ENCODE measurements at regions of chr1 and their contacts with region 1.

Region 1: GRCh38 chr1:54488779-54489626 is 59.0 kb upstream of the ACOT11 start:
- DNase-seq: peak; percentile 45 to 89 (median 74)
- ATAC-seq: peak; percentile 47
- H3K4me3 ChIP-seq: peak overlapping the region; percentile 71 to 90
- H3K4me3 Mint-ChIP-seq: peak overlapping the region; percentile 83
- H3K27ac ChIP-seq: peak overlapping the region; percentile 42 to 73
- H3K27ac Mint-ChIP-seq: peak overlapping the region; percentile 67
- H3K4me1 ChIP-seq: peaks cover 34% of the 10 kb centered on the region
- H3K4me1 Mint-ChIP-seq: peaks cover 37% of the 10 kb centered on the region
- H3K27me3 ChIP-seq: peaks cover 0 to 3% of the 10 kb centered on the region in 2 experiments
- H3K27me3 Mint-ChIP-seq: peaks cover 3% of the 10 kb centered on the region
- CTCF ChIP-seq: peak; percentile 96

Region 2: GRCh38 chr1:53889304-53890298 is 599.4 kb before region 1 on chr1 and contains the start of gene YIPF1:
- CTCF ChIA-PET with region 1: no interaction called
- POLR2A ChIA-PET with region 1: no interaction called
- intact Hi-C with region 1: loop called in 1 of 2 experiments (anchors 5 kb)
- DNase-seq: peak; percentile 68 to 92 (median 86)
- ATAC-seq: peak; percentile 98
- H3K4me3 ChIP-seq: peak within 1 kb of the TSS; percentile 69 to 97
- H3K4me3 Mint-ChIP-seq: peak within 1 kb of the TSS; percentile 94
- H3K27ac ChIP-seq: peak within 1 kb of the TSS; percentile 42 to 56
- H3K27ac Mint-ChIP-seq: peak within 1 kb of the TSS; percentile 94
- H3K4me1 ChIP-seq: peaks cover 19% of the 10 kb centered on the region
- H3K4me1 Mint-ChIP-seq: peaks cover 49% of the 10 kb centered on the region
- H3K27me3 ChIP-seq: no peaks in the 10 kb centered on the region
- H3K27me3 Mint-ChIP-seq: no peaks in the 10 kb centered on the region
- CTCF ChIP-seq: no peak
- total RNA-seq, gene YIPF1: 4.6 to 5.4 TPM

Region 3: GRCh38 chr1:54070171-54070837 is 418.7 kb before region 1 on chr1:
- CTCF ChIA-PET with region 1: interaction called, 17 read pairs
- POLR2A ChIA-PET with region 1: no interaction called
- intact Hi-C with region 1: loop called (anchors 1 kb)
- DNase-seq: peak in 2 of 9 experiments; percentile 62 to 75
- ATAC-seq: peak; percentile 89
- H3K4me3 ChIP-seq: no peak overlapping the region
- H3K4me3 Mint-ChIP-seq: no peak overlapping the region
- H3K27ac ChIP-seq: no peak overlapping the region
- H3K27ac Mint-ChIP-seq: no peak overlapping the region
- H3K4me1 ChIP-seq: no peaks in the 10 kb centered on the region
- H3K4me1 Mint-ChIP-seq: no peaks in the 10 kb centered on the region
- H3K27me3 ChIP-seq: no peaks in the 10 kb centered on the region
- H3K27me3 Mint-ChIP-seq: no peaks in the 10 kb centered on the region
- CTCF ChIP-seq: peak; percentile 85

Region 4: DNA sequence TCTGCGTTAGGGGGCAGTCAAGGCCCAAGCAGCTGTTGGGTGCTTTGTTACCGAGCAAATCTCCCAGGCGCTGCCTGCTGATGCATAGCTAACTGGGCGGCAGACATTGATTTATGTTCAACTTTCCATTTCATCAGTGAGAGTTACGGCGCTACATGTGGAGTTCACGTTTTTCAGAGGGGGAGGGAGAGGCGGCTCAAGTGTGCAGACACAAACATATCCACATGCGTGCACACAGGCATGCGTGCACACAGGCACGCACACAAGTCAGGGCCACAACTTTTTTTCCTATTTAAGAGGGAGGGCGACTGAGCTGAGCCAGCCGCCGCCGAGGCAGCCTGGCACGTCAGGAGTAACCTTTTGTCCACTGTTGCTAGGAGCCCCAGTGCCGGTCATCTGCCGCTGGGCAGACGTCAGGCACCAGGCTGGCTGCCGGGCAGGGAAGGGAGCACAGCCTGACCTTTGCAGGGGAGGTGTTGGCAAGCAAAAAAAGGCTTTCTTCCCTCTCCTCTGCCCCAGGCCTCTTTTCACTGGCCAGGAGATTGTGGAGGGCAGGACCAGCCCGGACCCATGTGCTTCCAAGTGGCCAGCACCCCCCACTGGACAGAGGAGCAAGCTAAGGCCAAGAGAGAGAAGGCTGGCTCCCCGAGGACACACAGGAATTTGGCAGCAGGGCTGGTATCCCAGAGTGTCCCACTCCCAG is 215.8 kb before region 1 on chr1:
- CTCF ChIA-PET with region 1: interaction called, 15 read pairs
- POLR2A ChIA-PET with region 1: no interaction called
- intact Hi-C with region 1: loop called (anchors 2 to 5 kb)
- DNase-seq: peak in 1 of 9 experiments; percentile 35
- ATAC-seq: peak; percentile 44
- H3K4me3 ChIP-seq: no peak overlapping the region
- H3K4me3 Mint-ChIP-seq: no peak overlapping the region
- H3K27ac ChIP-seq: no peak overlapping the region
- H3K27ac Mint-ChIP-seq: peak overlapping the region; percentile 27
- H3K4me1 ChIP-seq: peaks cover 17% of the 10 kb centered on the region
- H3K4me1 Mint-ChIP-seq: peaks cover 56% of the 10 kb centered on the region
- H3K27me3 ChIP-seq: no peaks in the 10 kb centered on the region
- H3K27me3 Mint-ChIP-seq: no peaks in the 10 kb centered on the region
- CTCF ChIP-seq: no peak

Region 5: GRCh38 chr1:54397090-54397591 is 91.9 kb before region 1 on chr1:
- CTCF ChIA-PET with region 1: interaction called, 21 read pairs
- POLR2A ChIA-PET with region 1: interaction called, 5 read pairs
- intact Hi-C with region 1: no loop called
- DNase-seq: no peak
- ATAC-seq: no peak
- H3K4me3 ChIP-seq: no peak overlapping the region
- H3K4me3 Mint-ChIP-seq: no peak overlapping the region
- H3K27ac ChIP-seq: no peak overlapping the region
- H3K27ac Mint-ChIP-seq: no peak overlapping the region
- H3K4me1 ChIP-seq: peaks cover 29% of the 10 kb centered on the region
- H3K4me1 Mint-ChIP-seq: peaks cover 64% of the 10 kb centered on the region
- H3K27me3 ChIP-seq: no peaks in the 10 kb centered on the region
- H3K27me3 Mint-ChIP-seq: no peaks in the 10 kb centered on the region
- CTCF ChIP-seq: no peak

Region 6: GRCh38 chr1:54564312-54565112 is 75.5 kb after region 1 on chr1:
- CTCF ChIA-PET with region 1: no interaction called
- POLR2A ChIA-PET with region 1: no interaction called
- intact Hi-C with region 1: no loop called
- DNase-seq: no peak
- ATAC-seq: no peak
- H3K4me3 ChIP-seq: no peak overlapping the region
- H3K4me3 Mint-ChIP-seq: no peak overlapping the region
- H3K27ac ChIP-seq: no peak overlapping the region
- H3K27ac Mint-ChIP-seq: no peak overlapping the region
- H3K4me1 ChIP-seq: no peaks in the 10 kb centered on the region
- H3K4me1 Mint-ChIP-seq: no peaks in the 10 kb centered on the region
- H3K27me3 ChIP-seq: no peaks in the 10 kb centered on the region
- H3K27me3 Mint-ChIP-seq: no peaks in the 10 kb centered on the region
- CTCF ChIP-seq: no peak

Region 7: DNA sequence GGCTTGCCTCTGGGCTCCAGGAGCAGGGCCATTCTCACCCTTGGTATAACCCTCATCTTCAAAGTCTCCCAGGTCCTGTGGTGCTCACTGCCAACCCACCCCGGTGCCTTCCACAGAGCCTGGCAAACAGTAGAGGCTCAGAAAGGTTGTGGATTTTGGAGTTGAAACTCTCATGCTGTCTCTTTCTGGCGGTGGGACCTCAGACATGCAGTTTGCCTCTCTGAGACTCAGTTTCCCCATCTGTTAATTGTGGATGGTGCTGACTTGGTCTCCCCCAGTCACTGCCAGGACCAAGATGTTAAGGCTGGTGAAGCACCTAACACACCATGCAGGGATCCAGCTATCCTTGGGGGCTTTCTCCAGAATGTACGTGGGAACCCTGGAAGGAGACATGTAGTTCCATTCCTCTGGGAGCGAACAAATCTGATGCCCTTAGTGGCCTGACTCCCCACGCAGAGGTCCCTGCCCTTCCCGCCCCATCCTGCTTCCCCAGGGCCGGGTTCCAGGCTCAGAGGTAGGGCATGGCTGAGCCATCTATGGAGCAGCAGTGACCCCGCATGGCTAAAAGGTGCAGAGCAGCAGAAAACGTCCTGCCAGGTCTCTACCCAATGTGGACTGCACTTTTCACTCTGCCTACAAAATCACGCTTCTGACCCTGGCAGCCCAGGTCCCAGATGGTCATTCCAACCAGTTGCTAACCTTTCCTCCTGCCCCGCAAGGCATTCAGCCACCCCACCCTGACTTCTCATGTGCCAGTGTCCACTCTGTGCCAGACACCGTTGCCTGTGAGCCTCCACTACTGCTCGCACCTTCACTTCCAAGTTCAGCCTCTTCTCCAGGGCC is 321.3 kb after region 1 on chr1:
- CTCF ChIA-PET with region 1: interaction called, 4 read pairs
- POLR2A ChIA-PET with region 1: no interaction called
- intact Hi-C with region 1: loop called in 1 of 2 experiments (anchors 1 kb)
- DNase-seq: peak; percentile 46 to 81 (median 64)
- ATAC-seq: peak; percentile 76
- H3K4me3 ChIP-seq: no peak overlapping the region
- H3K4me3 Mint-ChIP-seq: no peak overlapping the region
- H3K27ac ChIP-seq: no peak overlapping the region
- H3K27ac Mint-ChIP-seq: no peak overlapping the region
- H3K4me1 ChIP-seq: peaks cover 4% of the 10 kb centered on the region
- H3K4me1 Mint-ChIP-seq: no peaks in the 10 kb centered on the region
- H3K27me3 ChIP-seq: no peaks in the 10 kb centered on the region
- H3K27me3 Mint-ChIP-seq: no peaks in the 10 kb centered on the region
- CTCF ChIP-seq: peak; percentile 69

Measured in CD8-positive, alpha-beta T cell (primary cell).